OCI-LY7 (cell line): ENCODE measurements at regions of chr1 and their contacts with region 1.

Region 1: DNA sequence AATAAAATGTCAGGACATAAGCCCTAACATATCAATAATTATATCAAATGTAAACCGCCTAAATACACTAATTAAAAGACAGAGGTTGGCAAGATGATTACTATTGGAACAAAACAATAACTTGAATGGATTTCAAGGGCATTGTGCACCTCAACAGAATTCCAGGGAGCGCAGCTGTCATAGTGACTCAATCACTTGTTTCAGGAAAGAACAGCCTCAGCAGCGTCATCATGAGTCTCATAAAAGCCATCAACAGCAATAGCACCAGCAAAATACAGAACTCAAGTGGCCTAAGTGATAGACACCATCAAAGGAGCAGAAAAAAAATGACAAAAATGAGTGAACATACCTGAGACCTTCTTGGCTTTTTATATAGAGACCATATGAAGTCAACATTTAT is 632.7 kb upstream of the NR5A2 start:
- DNase-seq: no peak
- H3K4me3 ChIP-seq: no peak overlapping the region
- H3K27ac ChIP-seq: no peak overlapping the region
- H3K4me1 ChIP-seq: no peaks in the 10 kb centered on the region
- CTCF ChIP-seq: no peak

Region 2: GRCh38 chr1:200457810-200458209 is 1063.0 kb after region 1 on chr1:
- CTCF ChIA-PET with region 1: no interaction called
- POLR2A ChIA-PET with region 1: no interaction called
- intact Hi-C with region 1: loop called (anchors 5 kb)
- DNase-seq: no peak
- H3K4me3 ChIP-seq: no peak overlapping the region
- H3K27ac ChIP-seq: no peak overlapping the region
- H3K4me1 ChIP-seq: no peaks in the 10 kb centered on the region
- CTCF ChIP-seq: no peak